MCF 10A (cell line): ENCODE measurements at regions of chr1 and their contacts with region 1.

Region 1: DNA sequence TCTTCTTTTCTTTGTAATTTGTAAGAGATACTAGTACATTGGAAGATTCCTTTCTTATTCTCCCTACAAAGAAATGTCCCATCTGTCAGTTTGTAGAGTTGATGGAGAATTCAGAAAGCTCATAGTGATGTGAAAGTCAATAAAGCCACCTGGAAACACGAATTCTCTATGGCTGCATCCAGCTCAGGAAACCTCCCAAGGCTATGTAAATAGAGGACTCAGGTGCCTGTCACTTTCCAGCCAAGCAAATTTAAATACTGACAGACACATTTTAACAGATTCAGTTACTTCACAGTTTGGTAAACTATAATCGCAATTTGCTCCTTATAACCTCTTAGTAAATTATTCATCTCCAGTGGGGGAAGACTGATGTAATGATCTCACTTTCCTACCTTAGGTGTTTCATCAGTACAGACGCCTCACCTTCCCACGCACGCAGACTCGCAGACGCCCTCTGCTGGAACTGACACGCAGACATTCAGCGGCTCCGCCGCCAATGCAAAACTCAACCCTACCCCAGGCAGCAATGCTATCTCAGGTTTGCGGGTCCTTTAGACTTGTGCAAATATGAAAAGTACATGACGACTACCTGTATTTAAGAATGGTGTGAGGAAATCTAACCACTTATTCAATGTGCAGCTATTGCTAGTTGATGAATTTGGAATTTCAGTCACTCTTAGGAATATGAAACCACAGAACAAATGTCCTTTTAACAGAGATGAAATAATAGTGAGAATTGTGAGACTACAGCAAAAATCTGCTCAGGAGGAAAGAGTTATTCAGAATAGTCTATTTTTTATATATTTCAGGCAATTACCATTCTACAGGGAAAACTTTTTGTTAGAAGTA is 60.6 kb downstream of the PTPRC start:
- DNase-seq: peak; percentile 81
- H3K4me3 Mint-ChIP-seq: no peak overlapping the region
- H3K27ac Mint-ChIP-seq: no peak overlapping the region
- H3K4me1 Mint-ChIP-seq: peaks cover 10% of the 10 kb centered on the region
- H3K27me3 Mint-ChIP-seq: no peaks in the 10 kb centered on the region
- CTCF ChIP-seq: peak; percentile 96

Region 2: GRCh38 chr1:199463521-199464128 is 764.2 kb after region 1 on chr1:
- CTCF ChIA-PET with region 1: no interaction called
- POLR2A ChIA-PET with region 1: no interaction called
- intact Hi-C with region 1: loop called (anchors 1 kb)
- DNase-seq: peak; percentile 80
- H3K4me3 Mint-ChIP-seq: no peak overlapping the region
- H3K27ac Mint-ChIP-seq: no peak overlapping the region
- H3K4me1 Mint-ChIP-seq: no peaks in the 10 kb centered on the region
- H3K27me3 Mint-ChIP-seq: no peaks in the 10 kb centered on the region
- CTCF ChIP-seq: peak; percentile 79